ENCODE measurements at regions of chr4 and their contacts with region 1.

Region 1: GRCh38 chr4:153824501-153824900 is 35.6 kb upstream of the SFRP2 start:
- DNase-seq: no peak
- H3K4me3 ChIP-seq: no peak overlapping the region
- H3K27ac ChIP-seq: no peak overlapping the region
- H3K4me1 ChIP-seq: no peaks in the 10 kb centered on the region
- H3K27me3 ChIP-seq: no peaks in the 10 kb centered on the region
- CTCF ChIP-seq: no peak
- POLR2A ChIP-seq: no peak

Region 2: GRCh38 chr4:153794006-153794405 is 30.5 kb before region 1 on chr4:
- CTCF ChIA-PET with region 1: no interaction called
- POLR2A ChIA-PET with region 1: no interaction called
- dilution Hi-C with region 1: no loop called
- intact Hi-C with region 1: loop called (anchors 1 kb)
- DNase-seq: no peak
- H3K4me3 ChIP-seq: no peak overlapping the region
- H3K27ac ChIP-seq: no peak overlapping the region
- H3K4me1 ChIP-seq: peaks cover 12% of the 10 kb centered on the region
- H3K27me3 ChIP-seq: peaks cover 47 to 74% of the 10 kb centered on the region in 2 experiments
- CTCF ChIP-seq: no peak
- POLR2A ChIP-seq: no peak